Heart left ventricle (tissue), 16 donors: ENCODE measurements at regions of chr5 and their contacts with region 1.

Region 1: GRCh38 chr5:96934708-96935558 is 947 bp upstream of the LNPEP start:
- DNase-seq: peak; percentile 90 to 96 (median 94)
- ATAC-seq: peak; percentile 83 to 89 (median 88)
- H3K4me3 ChIP-seq: peak overlapping the region; percentile 60 to 92 (median 84)
- H3K27ac ChIP-seq: peak overlapping the region; percentile 89 to 99 (median 97)
- H3K4me1 ChIP-seq: peaks cover 0 to 64% (median 40%) of the 10 kb centered on the region in 12 donors
- H3K27me3 ChIP-seq: no peaks in the 10 kb centered on the region
- CTCF ChIP-seq: peak in 2 of 12 donors; percentile 5 to 7
- POLR2A ChIP-seq: peak in 1 of 2 donors; percentile 44

Region 2: GRCh38 chr5:96662725-96663513 is 272.0 kb before region 1 on chr5:
- intact Hi-C with region 1: loop called in 1 of 10 experiments (anchors 5 kb)
- DNase-seq: peak; percentile 91 to 96 (median 94)
- ATAC-seq: peak; percentile 87 to 95 (median 94)
- H3K4me3 ChIP-seq: peak overlapping the region; percentile 68 to 99 (median 92)
- H3K27ac ChIP-seq: peak overlapping the region; percentile 88 to 100 (median 98)
- H3K4me1 ChIP-seq: peaks cover 0 to 43% (median 21%) of the 10 kb centered on the region in 12 donors
- H3K27me3 ChIP-seq: no peaks in the 10 kb centered on the region
- CTCF ChIP-seq: no peak
- POLR2A ChIP-seq: peak; percentile 28 to 81

Region 3: DNA sequence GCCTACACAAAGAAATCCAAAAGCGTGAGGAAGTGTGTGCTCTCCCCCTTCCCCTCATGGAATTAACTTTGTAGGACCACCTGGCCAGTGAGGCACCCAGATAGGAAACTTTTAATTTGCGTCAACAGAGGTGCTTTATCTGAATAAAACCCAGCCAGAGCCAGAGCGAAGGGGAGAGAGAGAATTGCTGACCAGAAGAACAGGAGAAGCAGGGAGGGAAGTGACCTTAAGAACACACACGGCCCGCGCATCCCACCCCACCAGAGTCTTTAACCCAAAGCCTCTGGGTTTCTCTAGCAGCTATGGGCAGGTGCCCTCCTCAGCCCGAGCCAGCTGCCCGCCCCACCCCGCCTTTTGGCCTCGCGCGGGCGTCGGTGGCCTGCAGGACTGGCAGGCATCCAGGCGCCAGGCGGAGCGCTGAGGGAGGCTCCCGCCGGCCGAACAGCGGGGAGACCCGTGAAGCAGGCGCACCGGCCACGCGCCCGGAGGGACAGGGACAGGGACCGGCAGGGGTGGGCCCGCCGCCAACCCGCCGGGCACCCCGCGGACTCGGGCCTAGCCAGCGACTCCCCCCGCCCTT is 127.8 kb before region 1 on chr5:
- intact Hi-C with region 1: loop called in 3 of 10 experiments (anchors 2 to 5 kb)
- DNase-seq: peak; percentile 85 to 91 (median 87)
- ATAC-seq: peak; percentile 28 to 81 (median 69)
- H3K4me3 ChIP-seq: peak overlapping the region; percentile 65 to 96 (median 88)
- H3K27ac ChIP-seq: peak overlapping the region; percentile 97 to 100 (median 99)
- H3K4me1 ChIP-seq: peaks cover 0 to 54% (median 12%) of the 10 kb centered on the region in 12 donors
- H3K27me3 ChIP-seq: no peaks in the 10 kb centered on the region
- CTCF ChIP-seq: peak in 2 of 12 donors; percentile 4 to 5
- POLR2A ChIP-seq: peak in 1 of 2 donors; percentile 69

Region 4: DNA sequence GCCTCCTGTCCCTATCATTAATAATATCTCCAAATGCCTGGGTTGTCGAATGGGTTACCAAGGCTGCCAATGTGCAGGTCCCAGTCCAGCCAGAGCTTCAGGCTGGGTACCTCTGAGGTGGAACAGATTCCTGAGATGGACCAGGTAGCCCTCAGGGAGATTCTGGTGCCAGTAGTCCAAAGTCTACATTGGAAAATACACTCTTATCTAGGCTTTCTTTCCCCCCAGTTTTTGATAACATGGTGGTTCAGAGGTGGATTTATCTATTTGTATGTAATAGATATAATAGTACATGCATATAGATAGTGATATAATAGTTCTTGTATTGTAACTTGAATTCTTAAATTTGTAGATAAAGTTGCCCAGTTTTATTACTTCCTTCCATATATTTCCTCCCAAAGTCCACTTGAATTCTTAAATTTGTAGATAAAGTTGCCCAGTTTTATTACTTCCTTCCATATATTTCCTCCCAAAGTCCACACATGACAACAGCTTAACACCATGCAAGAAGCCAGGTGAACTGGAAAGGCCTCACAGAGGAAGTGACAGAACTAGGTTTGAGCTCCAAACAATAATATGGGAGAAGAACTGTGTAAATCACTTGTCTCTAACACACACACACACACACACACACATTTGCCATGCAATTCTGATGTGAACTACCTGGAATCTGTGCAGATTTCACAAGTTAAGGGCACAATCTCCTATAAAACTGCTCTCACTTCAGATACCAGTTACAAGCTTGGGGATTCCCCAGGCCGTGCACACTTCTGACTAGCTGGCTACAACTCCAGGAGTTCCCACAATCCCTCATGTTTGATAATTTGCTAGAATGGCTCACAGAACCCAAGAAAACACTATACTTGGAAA is 96.5 kb before region 1 on chr5:
- intact Hi-C with region 1: no loop called
- DNase-seq: no peak
- ATAC-seq: no peak
- H3K4me3 ChIP-seq: no peak overlapping the region
- H3K27ac ChIP-seq: no peak overlapping the region
- H3K4me1 ChIP-seq: no peaks in the 10 kb centered on the region
- H3K27me3 ChIP-seq: no peaks in the 10 kb centered on the region
- CTCF ChIP-seq: no peak
- POLR2A ChIP-seq: no peak

Region 5: DNA sequence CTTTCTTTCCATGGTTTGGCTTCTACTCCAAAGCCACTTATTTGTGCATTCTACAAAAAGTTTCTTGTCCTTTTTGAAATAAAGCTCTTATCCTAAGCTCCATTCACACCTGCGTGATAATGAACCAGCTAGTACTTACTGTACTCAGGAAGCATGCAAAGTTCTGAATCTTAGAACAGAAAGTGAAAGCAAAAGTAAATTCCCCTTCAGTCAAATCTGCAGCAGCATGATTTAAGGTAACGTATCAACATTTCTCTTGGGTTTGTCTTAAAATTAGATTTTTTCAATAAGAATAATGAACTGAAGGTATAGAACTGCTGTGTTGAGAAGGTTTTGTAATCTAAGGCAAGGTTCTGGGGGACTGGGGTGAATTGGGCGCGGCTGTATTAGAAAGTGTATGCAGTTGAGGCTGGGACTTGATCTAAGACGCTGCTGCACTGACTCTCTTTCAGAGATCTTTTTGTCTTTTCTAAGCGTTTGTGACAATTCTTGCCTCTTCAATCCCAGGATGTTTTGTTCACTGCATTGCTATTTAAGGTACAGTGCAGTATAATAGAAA is 58.6 kb before region 1 on chr5 and contains the start of gene ERAP2:
- intact Hi-C with region 1: loop called in 5 of 10 experiments (anchors 1 to 10 kb)
- DNase-seq: no peak
- ATAC-seq: peak; percentile 52 to 86 (median 70)
- H3K4me3 ChIP-seq: peak within 1 kb of the TSS; percentile 36 to 93 (median 67)
- H3K27ac ChIP-seq: peak within 1 kb of the TSS; percentile 29 to 91 (median 76)
- H3K4me1 ChIP-seq: peaks cover 0 to 49% (median 7%) of the 10 kb centered on the region in 12 donors
- H3K27me3 ChIP-seq: no peaks in the 10 kb centered on the region
- CTCF ChIP-seq: no peak
- POLR2A ChIP-seq: no peak
- total RNA-seq, gene ERAP2: 2.7 to 30.5 (median 7.0) TPM

Region 6: DNA sequence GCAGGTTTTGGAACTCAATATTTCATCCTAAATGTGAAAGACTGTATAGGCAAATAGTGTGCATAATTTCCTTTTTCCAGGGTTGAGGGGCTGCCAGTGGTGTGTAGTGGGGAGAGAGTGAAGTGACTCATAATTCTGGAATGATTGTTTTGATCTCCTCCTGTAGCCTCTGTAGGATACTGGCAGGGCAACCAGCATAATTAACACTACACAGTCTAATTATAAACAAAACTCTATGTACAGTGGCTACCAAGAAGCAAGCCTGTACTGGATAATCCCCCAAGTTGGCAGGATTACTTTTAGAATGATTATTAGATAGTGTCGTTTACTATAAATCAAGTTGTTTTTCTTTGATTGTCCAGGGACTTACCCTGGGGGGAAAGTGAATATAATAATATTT is 33.1 kb after region 1 on chr5:
- intact Hi-C with region 1: loop called in 3 of 10 experiments (anchors 2 to 5 kb)
- DNase-seq: no peak
- ATAC-seq: peak; percentile 77 to 92 (median 82)
- H3K4me3 ChIP-seq: no peak overlapping the region
- H3K27ac ChIP-seq: peak overlapping the region; percentile 0 to 70 (median 38)
- H3K4me1 ChIP-seq: peaks cover 0 to 66% (median 42%) of the 10 kb centered on the region in 12 donors
- H3K27me3 ChIP-seq: no peaks in the 10 kb centered on the region
- CTCF ChIP-seq: no peak
- POLR2A ChIP-seq: no peak

Region 7: GRCh38 chr5:96973532-96974401 is 38.8 kb after region 1 on chr5:
- intact Hi-C with region 1: loop called in 3 of 10 experiments (anchors 2 to 5 kb)
- DNase-seq: no peak
- ATAC-seq: no peak
- H3K4me3 ChIP-seq: no peak overlapping the region
- H3K27ac ChIP-seq: no peak overlapping the region
- H3K4me1 ChIP-seq: peaks cover 0 to 81% (median 45%) of the 10 kb centered on the region in 12 donors
- H3K27me3 ChIP-seq: no peaks in the 10 kb centered on the region
- CTCF ChIP-seq: no peak
- POLR2A ChIP-seq: no peak

Region 8: DNA sequence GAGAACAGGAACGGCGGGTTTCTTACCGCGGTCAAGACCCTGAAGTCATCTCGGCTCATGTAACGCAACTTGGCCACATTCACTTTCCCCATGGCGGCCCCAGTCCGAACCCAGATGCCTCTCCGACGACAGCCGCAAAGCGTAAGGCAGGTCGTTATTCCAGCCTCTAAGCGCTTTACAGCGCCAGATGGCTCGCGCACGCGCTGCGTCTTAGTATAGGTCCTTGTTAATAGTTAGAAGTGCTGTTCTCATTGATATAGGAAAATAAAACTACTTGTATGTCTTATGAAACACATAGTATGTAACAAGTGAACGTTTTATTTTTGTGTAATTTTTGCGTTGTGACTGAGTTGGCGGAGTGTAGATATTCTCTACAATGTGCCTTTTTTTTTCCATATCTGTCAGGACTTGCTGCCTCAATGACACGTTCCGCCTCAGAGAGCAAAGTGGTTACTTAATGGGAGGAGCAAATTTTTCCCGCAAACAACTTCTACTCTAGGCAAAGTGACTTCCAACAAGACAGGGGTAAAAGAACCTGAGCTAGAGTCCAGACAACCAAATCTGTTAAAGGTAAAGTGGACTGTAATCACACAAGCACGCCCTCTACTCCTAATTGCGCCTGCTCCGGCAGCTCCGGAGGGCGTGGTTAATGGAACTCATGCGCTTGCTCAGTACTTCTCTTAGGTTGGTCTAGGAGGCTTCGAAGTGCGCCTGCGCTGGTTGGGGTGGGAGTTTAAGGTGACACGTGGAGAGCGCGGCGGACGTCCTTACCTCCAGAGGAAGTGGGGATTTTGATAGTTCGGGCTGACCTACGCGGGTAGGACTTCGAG is 248.4 kb after region 1 on chr5 and contains the start of gene RIOK2:
- intact Hi-C with region 1: loop called in 1 of 10 experiments (anchors 5 kb)
- DNase-seq: peak; percentile 93 to 96 (median 96)
- ATAC-seq: peak; percentile 96 to 98 (median 97)
- H3K4me3 ChIP-seq: peak within 1 kb of the TSS; percentile 48 to 97 (median 78)
- H3K27ac ChIP-seq: peak within 1 kb of the TSS; percentile 88 to 94 (median 91)
- H3K4me1 ChIP-seq: peaks cover 0 to 32% (median 20%) of the 10 kb centered on the region in 12 donors
- H3K27me3 ChIP-seq: no peaks in the 10 kb centered on the region
- CTCF ChIP-seq: no peak
- POLR2A ChIP-seq: peak in 1 of 2 donors; percentile 56
- total RNA-seq, gene RIOK2: 8.2 to 23.6 (median 16.9) TPM